ENCODE measurements at regions of chr1 and their contacts with region 1.

Region 1: GRCh38 chr1:54810100-54810942 is 9.2 kb upstream of the TTC22 start:
- DNase-seq: peak; percentile 77 to 85 (median 82)
- ATAC-seq: peak; percentile 93 to 95 (median 94)
- H3K4me3 ChIP-seq: no peak overlapping the region
- H3K27ac ChIP-seq: no peak overlapping the region
- H3K4me1 ChIP-seq: peaks cover 0 to 24% (median 6%) of the 10 kb centered on the region in 4 donors
- H3K27me3 ChIP-seq: no peaks in the 10 kb centered on the region
- CTCF ChIP-seq: peak; percentile 86 to 94 (median 88)
- POLR2A ChIP-seq: no peak

Region 2: DNA sequence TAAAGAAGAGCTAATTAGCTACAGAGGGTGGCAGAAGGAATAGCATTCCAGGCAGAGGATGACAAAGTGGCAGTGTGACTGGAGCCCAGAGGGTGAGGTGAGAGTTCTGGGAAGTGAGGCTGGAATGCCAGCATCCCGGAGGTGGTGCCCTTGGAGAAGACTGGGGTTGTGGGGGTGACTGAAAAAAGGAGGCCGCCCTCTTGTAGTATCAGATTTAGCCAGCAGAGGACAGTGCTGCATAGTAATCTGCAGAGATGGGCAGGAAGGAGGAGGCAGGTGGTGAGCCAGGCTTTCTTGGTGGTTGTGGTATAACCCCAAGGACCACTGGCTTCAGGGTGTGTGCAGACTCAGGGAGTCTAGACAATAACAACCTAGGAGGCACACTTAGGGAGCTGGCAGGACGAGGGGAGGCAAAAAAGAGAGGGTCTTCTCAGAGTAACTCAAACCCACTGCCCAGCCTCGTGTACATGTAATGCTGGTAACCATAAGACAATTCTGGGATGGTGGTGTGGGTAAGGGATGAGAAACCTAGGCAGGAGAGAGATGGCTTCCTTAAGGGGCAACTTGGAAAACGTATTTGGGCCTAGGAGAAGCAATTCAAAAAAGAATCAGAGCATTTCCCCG is 138.2 kb before region 1 on chr1:
- intact Hi-C with region 1: loop called (anchors 10 kb)
- DNase-seq: peak in 2 of 3 donors; percentile 28 to 66
- ATAC-seq: peak; percentile 90 to 97 (median 94)
- H3K4me3 ChIP-seq: no peak overlapping the region
- H3K27ac ChIP-seq: no peak overlapping the region
- H3K4me1 ChIP-seq: no peaks in the 10 kb centered on the region
- H3K27me3 ChIP-seq: no peaks in the 10 kb centered on the region
- CTCF ChIP-seq: peak; percentile 71 to 94 (median 79)
- POLR2A ChIP-seq: no peak